Activated CD4-positive, alpha-beta T cell treated with anti-CD3 and anti-CD28 coated beads for 36 hours (primary cell): ENCODE measurements at regions of chr11 and their contacts with region 1.

Region 1: GRCh38 chr11:114026355-114026754 is 33.2 kb upstream of the ZBTB16 start:
- DNase-seq: peak; percentile 42
- ATAC-seq: peak; percentile 51
- H3K4me3 Mint-ChIP-seq: no peak overlapping the region
- H3K27ac Mint-ChIP-seq: no peak overlapping the region
- H3K4me1 Mint-ChIP-seq: peaks cover 1% of the 10 kb centered on the region
- H3K27me3 Mint-ChIP-seq: no peaks in the 10 kb centered on the region

Region 2: GRCh38 chr11:114307524-114308203 is 281.3 kb after region 1 on chr11:
- CTCF ChIA-PET with region 1: no interaction called
- POLR2A ChIA-PET with region 1: no interaction called
- intact Hi-C with region 1: loop called in 1 of 2 experiments (anchors 1 kb)
- DNase-seq: no peak
- ATAC-seq: no peak
- H3K4me3 Mint-ChIP-seq: no peak overlapping the region
- H3K27ac Mint-ChIP-seq: no peak overlapping the region
- H3K4me1 Mint-ChIP-seq: peaks cover 3% of the 10 kb centered on the region
- H3K27me3 Mint-ChIP-seq: peaks cover 30% of the 10 kb centered on the region